ENCODE measurements at regions of chr1 and their contacts with region 1.

Region 1: GRCh38 chr1:235253219-235253962 is 74.6 kb downstream of the ARID4B start:
- DNase-seq: peak; percentile 92
- H3K4me3 ChIP-seq: no peak overlapping the region
- H3K27ac ChIP-seq: no peak overlapping the region
- H3K4me1 ChIP-seq: peaks cover 0 to 28% (median 15%) of the 10 kb centered on the region in 4 donors
- H3K27me3 ChIP-seq: no peaks in the 10 kb centered on the region
- CTCF ChIP-seq: peak; percentile 84 to 88 (median 88)
- EP300 ChIP-seq: no peak
- POLR2A ChIP-seq: no peak

Region 2: GRCh38 chr1:235128456-235129328 is 124.7 kb before region 1 on chr1 and contains the start of gene TOMM20:
- intact Hi-C with region 1: no loop called
- DNase-seq: peak; percentile 98
- H3K4me3 ChIP-seq: peak within 1 kb of the TSS; percentile 72 to 91 (median 80)
- H3K27ac ChIP-seq: peak within 1 kb of the TSS; percentile 86 to 95 (median 88)
- H3K4me1 ChIP-seq: peaks cover 15 to 43% (median 40%) of the 10 kb centered on the region in 4 donors
- H3K27me3 ChIP-seq: no peaks in the 10 kb centered on the region
- CTCF ChIP-seq: no peak
- EP300 ChIP-seq: no peak
- POLR2A ChIP-seq: peak; percentile 83
- total RNA-seq, gene TOMM20: 59.7 to 94.3 (median 86.3) TPM

Region 3: DNA sequence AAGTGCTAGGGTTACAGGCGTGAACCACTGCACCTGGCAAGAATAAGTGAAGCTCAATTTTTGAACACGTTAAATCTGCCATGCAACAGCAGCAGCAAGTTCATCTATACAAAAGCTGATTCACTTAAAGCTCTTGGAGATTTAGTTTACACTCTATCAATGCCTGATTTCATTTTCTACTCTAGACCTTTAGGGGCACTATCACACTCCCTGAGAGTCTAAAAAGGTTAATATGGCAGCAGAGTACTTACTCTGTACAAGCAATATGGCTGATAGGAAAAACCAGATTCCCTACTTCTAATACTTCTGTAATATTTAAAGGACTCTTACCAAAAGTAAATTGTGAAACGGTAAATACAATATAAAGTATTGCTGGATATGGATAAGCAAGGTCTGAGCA is 97.1 kb before region 1 on chr1:
- intact Hi-C with region 1: no loop called
- DNase-seq: no peak
- H3K4me3 ChIP-seq: no peak overlapping the region
- H3K27ac ChIP-seq: no peak overlapping the region
- H3K4me1 ChIP-seq: peaks cover 13 to 37% (median 29%) of the 10 kb centered on the region in 4 donors
- H3K27me3 ChIP-seq: no peaks in the 10 kb centered on the region
- CTCF ChIP-seq: no peak
- EP300 ChIP-seq: no peak
- POLR2A ChIP-seq: no peak

Region 4: DNA sequence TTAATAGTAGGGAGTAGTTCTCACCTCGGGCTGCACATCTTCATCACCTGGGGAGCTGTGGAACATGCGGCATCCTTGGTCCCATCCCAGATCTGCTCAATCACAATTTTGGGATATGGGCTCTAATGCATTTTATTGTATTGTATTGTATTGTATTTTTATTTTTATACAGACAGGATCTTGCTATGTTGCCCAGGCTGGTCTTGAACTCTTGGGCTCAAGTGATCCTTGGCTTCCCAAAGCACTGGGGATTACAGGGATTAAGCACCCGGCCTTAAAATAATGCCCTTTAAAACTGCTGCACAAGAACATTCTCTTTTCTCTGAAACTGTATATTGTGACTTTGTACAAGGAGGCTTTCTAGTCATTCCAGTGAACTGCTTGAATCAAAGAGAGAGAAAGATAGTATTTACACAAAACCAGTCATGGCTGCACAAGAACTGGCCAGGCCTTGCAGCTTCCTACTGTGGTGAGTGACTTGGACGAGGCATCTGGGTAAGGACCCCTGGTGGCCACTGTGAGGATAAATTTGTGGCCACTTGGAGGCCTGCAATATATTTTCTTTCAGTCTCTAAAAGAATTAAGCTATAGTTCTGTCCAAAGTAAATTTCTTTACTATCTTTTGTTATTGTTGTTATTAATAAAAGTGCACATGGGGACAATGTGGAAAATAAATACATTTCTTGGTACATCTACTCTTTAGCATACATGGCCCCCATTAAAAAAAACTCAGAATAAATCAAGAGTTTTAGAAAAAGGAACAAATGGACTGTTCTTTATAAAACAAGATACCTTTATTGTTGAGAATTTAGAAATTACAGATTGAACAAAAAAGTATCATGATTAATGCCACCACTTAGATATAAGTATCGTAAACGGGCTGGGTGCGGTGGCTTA is 161.9 kb after region 1 on chr1:
- intact Hi-C with region 1: loop called (anchors 2 kb)
- DNase-seq: no peak
- H3K4me3 ChIP-seq: no peak overlapping the region
- H3K27ac ChIP-seq: no peak overlapping the region
- H3K4me1 ChIP-seq: peaks cover 3 to 10% (median 6%) of the 10 kb centered on the region in 4 donors
- H3K27me3 ChIP-seq: no peaks in the 10 kb centered on the region
- CTCF ChIP-seq: peak; percentile 60 to 71 (median 64)
- EP300 ChIP-seq: no peak
- POLR2A ChIP-seq: no peak

Measured in esophagus muscularis mucosa (tissue), 4 donors.